Activated CD4-positive, alpha-beta T cell treated with anti-CD3 and anti-CD28 coated beads, Interleukin-2, amount 10 ng/mL, durations not matched to agents 24 days and 14 days (primary cell): ENCODE measurements at regions of chrX and their contacts with region 1.

Region 1: GRCh38 chrX:66728818-66729271 is 90.0 kb upstream of the EDA2R start:
- DNase-seq: peak; percentile 84
- H3K4me3 Mint-ChIP-seq: peak overlapping the region; percentile 95
- H3K27ac Mint-ChIP-seq: peak overlapping the region; percentile 88
- H3K4me1 Mint-ChIP-seq: no peaks in the 10 kb centered on the region
- H3K27me3 Mint-ChIP-seq: no peaks in the 10 kb centered on the region

Region 2: DNA sequence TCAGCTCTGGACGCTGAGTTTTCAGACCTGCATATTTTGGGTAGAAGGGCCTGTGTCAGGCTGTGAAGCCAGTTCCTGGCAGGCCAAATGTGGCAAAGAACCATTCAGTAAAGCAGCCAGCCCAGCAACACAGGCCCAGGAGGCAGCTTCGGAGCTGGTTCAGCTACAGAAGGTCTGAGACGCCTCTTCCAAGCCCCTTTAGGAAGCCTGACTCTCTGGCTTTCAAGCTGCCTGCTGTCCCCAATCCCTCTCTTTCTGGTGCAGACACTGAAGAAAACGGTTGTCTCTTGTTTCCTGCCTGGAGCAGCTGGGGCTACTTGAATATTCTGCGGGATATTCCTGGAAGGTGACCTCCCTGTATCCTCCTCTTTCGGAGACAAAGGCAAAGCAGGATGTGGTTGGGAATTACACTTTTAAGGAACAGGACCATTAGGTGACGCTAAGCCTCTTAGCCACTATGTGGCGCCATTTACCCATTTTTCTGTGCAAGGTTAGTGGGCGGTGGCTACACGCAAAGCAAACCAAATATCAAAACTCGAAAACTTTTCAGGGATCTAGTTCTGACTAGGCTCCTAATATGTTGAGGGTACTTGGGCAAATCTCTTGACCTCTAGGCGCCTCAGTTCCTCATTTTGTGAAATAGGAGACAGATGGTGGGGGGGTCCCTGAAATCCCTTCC is 1147.0 kb before region 1 on chrX:
- intact Hi-C with region 1: loop called (anchors 1 kb)
- DNase-seq: peak; percentile 86
- H3K4me3 Mint-ChIP-seq: no peak overlapping the region
- H3K27ac Mint-ChIP-seq: no peak overlapping the region
- H3K4me1 Mint-ChIP-seq: peaks cover 8% of the 10 kb centered on the region
- H3K27me3 Mint-ChIP-seq: no peaks in the 10 kb centered on the region

Region 3: GRCh38 chrX:66015152-66015831 is 713.6 kb before region 1 on chrX:
- intact Hi-C with region 1: loop called (anchors 10 kb)
- DNase-seq: peak; percentile 78
- H3K4me3 Mint-ChIP-seq: peak overlapping the region; percentile 64
- H3K27ac Mint-ChIP-seq: peak overlapping the region; percentile 77
- H3K4me1 Mint-ChIP-seq: peaks cover 65% of the 10 kb centered on the region
- H3K27me3 Mint-ChIP-seq: no peaks in the 10 kb centered on the region

Region 4: GRCh38 chrX:66200855-66201795 is 527.7 kb before region 1 on chrX:
- intact Hi-C with region 1: loop called (anchors 1 kb)
- DNase-seq: no peak
- H3K4me3 Mint-ChIP-seq: peak overlapping the region; percentile 9
- H3K27ac Mint-ChIP-seq: no peak overlapping the region
- H3K4me1 Mint-ChIP-seq: peaks cover 23% of the 10 kb centered on the region
- H3K27me3 Mint-ChIP-seq: no peaks in the 10 kb centered on the region

Region 5: DNA sequence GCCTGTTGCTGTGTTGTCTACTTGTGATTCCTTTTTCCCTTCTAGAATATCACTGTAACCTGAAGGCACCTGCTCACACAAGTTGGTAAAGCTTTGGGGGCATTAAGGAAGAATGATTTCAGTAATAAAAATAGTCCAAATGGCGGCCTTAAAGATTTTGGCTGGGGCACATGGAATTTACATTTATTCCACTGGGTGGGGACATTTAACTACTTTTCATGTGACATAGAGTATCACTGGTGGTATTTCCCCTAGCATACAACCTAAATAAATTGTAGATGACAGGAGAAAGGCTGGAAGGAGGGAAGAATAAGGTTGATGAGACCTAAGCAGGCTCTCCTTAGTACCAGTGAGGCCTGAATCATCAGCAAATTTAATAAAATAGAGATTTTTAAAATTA is 31.8 kb after region 1 on chrX:
- intact Hi-C with region 1: no loop called
- DNase-seq: no peak
- H3K4me3 Mint-ChIP-seq: no peak overlapping the region
- H3K27ac Mint-ChIP-seq: no peak overlapping the region
- H3K4me1 Mint-ChIP-seq: no peaks in the 10 kb centered on the region
- H3K27me3 Mint-ChIP-seq: no peaks in the 10 kb centered on the region